GM13976 (cell line): ENCODE measurements at regions of chr9 and their contacts with region 1.

Region 1: GRCh38 chr9:134443168-134444037 is 117.1 kb downstream of the RXRA start:
- DNase-seq: peak; percentile 95
- CTCF ChIP-seq: peak; percentile 96

Region 2: GRCh38 chr9:134171316-134172197 is 271.8 kb before region 1 on chr9:
- in situ Hi-C with region 1: loop called (anchors 5 kb)
- DNase-seq: no peak
- CTCF ChIP-seq: no peak